ENCODE measurements at regions of chr17 and their contacts with region 1.

Region 1: GRCh38 chr17:7219812-7220581 is at the starts of genes ACADVL and DLG4:
- DNase-seq: peak; percentile 74 to 78 (median 78)
- H3K4me3 ChIP-seq: peak within 1 kb of the TSS; percentile 65 to 94 (median 77)
- H3K4me3 Mint-ChIP-seq: peak within 1 kb of the TSS; percentile 96 to 98
- H3K27ac ChIP-seq: peak within 1 kb of the TSS; percentile 50 to 85
- H3K27ac Mint-ChIP-seq: peak within 1 kb of the TSS; percentile 89 to 97 (median 94)
- H3K4me1 ChIP-seq: peaks cover 56 to 65% of the 10 kb centered on the region in 2 donors
- H3K4me1 Mint-ChIP-seq: peaks cover 60% of the 10 kb centered on the region
- H3K27me3 ChIP-seq: no peaks in the 10 kb centered on the region
- H3K27me3 Mint-ChIP-seq: peaks cover 0 to 2% (median 2%) of the 10 kb centered on the region in 3 donors
- CTCF ChIP-seq: no peak
- polyA plus RNA-seq, gene ACADVL: 152 to 1,231 (median 154) TPM
- polyA plus RNA-seq, gene DLG4: 0.37 to 42.6 (median 0.39) TPM

Region 2: DNA sequence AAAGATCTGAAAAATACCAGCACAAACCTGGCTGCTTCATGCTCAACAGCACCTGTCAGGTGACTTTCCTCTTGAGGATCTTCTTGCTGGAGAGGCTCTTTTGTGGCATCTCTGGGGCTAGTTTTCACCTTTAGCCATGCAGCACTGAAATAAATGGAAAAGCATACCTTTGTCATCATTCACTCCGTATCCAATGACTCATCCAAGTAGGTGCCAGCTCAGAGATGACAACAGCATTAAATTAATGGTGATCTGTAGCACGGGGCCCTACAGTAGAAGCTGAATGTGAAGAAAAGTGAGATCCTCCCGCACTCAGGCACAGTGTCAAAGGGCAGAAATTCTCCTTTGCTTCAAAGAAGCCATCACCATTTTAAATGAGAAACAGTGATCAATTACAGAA is 611.7 kb before region 1 on chr17:
- intact Hi-C with region 1: no loop called
- DNase-seq: no peak
- H3K4me3 ChIP-seq: no peak overlapping the region
- H3K4me3 Mint-ChIP-seq: no peak overlapping the region
- H3K27ac ChIP-seq: no peak overlapping the region
- H3K27ac Mint-ChIP-seq: no peak overlapping the region
- H3K4me1 ChIP-seq: no peaks in the 10 kb centered on the region
- H3K4me1 Mint-ChIP-seq: no peaks in the 10 kb centered on the region
- H3K27me3 ChIP-seq: no peaks in the 10 kb centered on the region
- H3K27me3 Mint-ChIP-seq: peaks cover 0 to 2% (median 0%) of the 10 kb centered on the region in 3 donors
- CTCF ChIP-seq: no peak

Region 3: GRCh38 chr17:7239091-7240027 is 19.4 kb after region 1 on chr17 and contains the start of gene PHF23:
- intact Hi-C with region 1: loop called in 1 of 2 experiments (anchors 2 kb)
- DNase-seq: peak; percentile 98 to 99 (median 99)
- H3K4me3 ChIP-seq: peak within 1 kb of the TSS; percentile 95 to 100 (median 98)
- H3K4me3 Mint-ChIP-seq: peak within 1 kb of the TSS; percentile 98 to 99
- H3K27ac ChIP-seq: peak within 1 kb of the TSS; percentile 64 to 100
- H3K27ac Mint-ChIP-seq: peak within 1 kb of the TSS; percentile 99 to 100 (median 100)
- H3K4me1 ChIP-seq: peaks cover 54 to 64% of the 10 kb centered on the region in 2 donors
- H3K4me1 Mint-ChIP-seq: peaks cover 57% of the 10 kb centered on the region
- H3K27me3 ChIP-seq: no peaks in the 10 kb centered on the region
- H3K27me3 Mint-ChIP-seq: peaks cover 0 to 5% (median 0%) of the 10 kb centered on the region in 3 donors
- CTCF ChIP-seq: no peak
- polyA plus RNA-seq, gene PHF23: 12.0 to 18.0 (median 12.9) TPM

Measured in CD14-positive monocyte (primary cell).